ENCODE measurements at regions of chr15 and their contacts with region 1.

Region 1: DNA sequence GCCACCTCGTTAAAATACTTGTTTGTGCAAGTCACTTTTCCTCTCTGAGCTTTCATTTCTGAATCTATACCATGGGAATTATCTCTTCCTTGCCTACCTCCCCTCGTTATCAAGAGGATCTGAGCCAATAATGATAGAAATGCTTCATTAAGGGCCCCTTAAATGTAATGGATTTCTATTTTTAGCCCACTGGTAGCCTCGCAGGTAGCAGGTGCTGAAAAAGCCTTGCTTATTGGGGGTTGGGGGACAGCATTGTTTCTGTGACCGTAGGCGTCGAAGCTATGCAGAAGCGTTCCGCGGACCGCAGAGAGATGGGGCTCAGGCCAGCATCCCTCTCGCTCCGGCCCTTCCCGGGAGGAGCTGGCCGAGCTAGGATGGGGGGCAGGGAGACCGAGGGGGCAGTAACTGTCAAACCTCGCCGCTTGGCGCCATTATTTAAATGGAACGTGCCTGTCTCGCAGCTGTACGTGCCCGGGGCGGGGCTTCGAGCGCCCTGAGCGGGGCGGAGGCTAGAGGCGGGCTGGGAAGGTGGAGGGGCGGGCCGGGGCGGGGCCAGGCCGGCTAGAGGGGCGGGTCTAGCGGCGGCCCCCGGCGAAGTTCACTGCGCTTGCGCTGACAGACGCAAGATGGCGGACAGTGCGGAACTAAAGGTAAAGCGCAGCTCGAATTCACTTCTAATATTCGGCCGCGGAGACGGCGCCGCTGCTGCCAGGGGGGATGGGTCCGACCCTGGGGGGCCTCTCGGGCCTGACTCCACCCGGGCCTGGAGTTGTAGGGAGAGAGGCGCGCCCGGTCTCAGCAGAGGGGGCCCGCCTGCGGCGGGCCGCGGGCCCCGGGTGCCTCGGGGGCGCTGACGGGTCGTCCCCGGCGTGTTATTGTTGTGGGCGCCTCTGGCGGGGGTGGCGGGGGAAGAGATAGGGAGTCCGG is at the start of gene PIAS1:
- DNase-seq: peak; percentile 89
- ATAC-seq: peak; percentile 91
- H3K4me3 ChIP-seq: peak within 1 kb of the TSS; percentile 87 to 100 (median 94)
- H3K27ac ChIP-seq: peak within 1 kb of the TSS; percentile 94
- H3K4me1 ChIP-seq: peaks cover 51% of the 10 kb centered on the region
- H3K27me3 ChIP-seq: no peaks in the 10 kb centered on the region
- CTCF ChIP-seq: no peak
- EP300 ChIP-seq: peak in 1 of 2 experiments; percentile 46; a peak in 1 of 4 replicates
- POLR2A ChIP-seq: peak; percentile 80 to 85
- RAD21 ChIP-seq: no peak; the same call in 1 of the 2 replicates
- total RNA-seq, gene PIAS1: 20.7 and 23.2 TPM in 2 replicates

Region 2: GRCh38 chr15:67839929-67840748 is 213.8 kb before region 1 on chr15 and contains the start of gene RNU6-1:
- CTCF ChIA-PET with region 1: no interaction called
- POLR2A ChIA-PET with region 1: interaction called, 5 read pairs
- in situ Hi-C with region 1: no loop called
- intact Hi-C with region 1: loop called (anchors 5 kb)
- DNase-seq: peak; percentile 80
- ATAC-seq: peak; percentile 26
- H3K4me3 ChIP-seq: peak within 1 kb of the TSS; percentile 73 to 98 (median 93)
- H3K27ac ChIP-seq: peak within 1 kb of the TSS; percentile 86
- H3K4me1 ChIP-seq: peaks cover 81% of the 10 kb centered on the region
- H3K27me3 ChIP-seq: peaks cover 0 to 15% of the 10 kb centered on the region in 2 experiments; a peak in 4 of 5 replicates
- CTCF ChIP-seq: no peak
- EP300 ChIP-seq: no peak
- POLR2A ChIP-seq: peak; percentile 68 to 84
- RAD21 ChIP-seq: no peak
- total RNA-seq, gene RNU6-1: under 0.01 TPM in 1 of 2 replicates, not detected in the other

Region 3: GRCh38 chr15:67884514-67885487 is 169.2 kb before region 1 on chr15:
- CTCF ChIA-PET with region 1: no interaction called
- POLR2A ChIA-PET with region 1: no interaction called
- in situ Hi-C with region 1: no loop called
- intact Hi-C with region 1: loop called (anchors 2 kb)
- DNase-seq: peak; percentile 89
- ATAC-seq: peak; percentile 96
- H3K4me3 ChIP-seq: peak overlapping the region; percentile 43 to 60 (median 54); a peak in 5 of 6 replicates
- H3K27ac ChIP-seq: peak overlapping the region; percentile 81
- H3K4me1 ChIP-seq: peaks cover 60% of the 10 kb centered on the region
- H3K27me3 ChIP-seq: no peaks in the 10 kb centered on the region
- CTCF ChIP-seq: no peak
- EP300 ChIP-seq: peak; percentile 70 to 93; a peak in 3 of 4 replicates
- POLR2A ChIP-seq: peak; percentile 47 to 52; a peak in 3 of 4 replicates
- RAD21 ChIP-seq: no peak; the same call in 1 of the 2 replicates

Region 4: DNA sequence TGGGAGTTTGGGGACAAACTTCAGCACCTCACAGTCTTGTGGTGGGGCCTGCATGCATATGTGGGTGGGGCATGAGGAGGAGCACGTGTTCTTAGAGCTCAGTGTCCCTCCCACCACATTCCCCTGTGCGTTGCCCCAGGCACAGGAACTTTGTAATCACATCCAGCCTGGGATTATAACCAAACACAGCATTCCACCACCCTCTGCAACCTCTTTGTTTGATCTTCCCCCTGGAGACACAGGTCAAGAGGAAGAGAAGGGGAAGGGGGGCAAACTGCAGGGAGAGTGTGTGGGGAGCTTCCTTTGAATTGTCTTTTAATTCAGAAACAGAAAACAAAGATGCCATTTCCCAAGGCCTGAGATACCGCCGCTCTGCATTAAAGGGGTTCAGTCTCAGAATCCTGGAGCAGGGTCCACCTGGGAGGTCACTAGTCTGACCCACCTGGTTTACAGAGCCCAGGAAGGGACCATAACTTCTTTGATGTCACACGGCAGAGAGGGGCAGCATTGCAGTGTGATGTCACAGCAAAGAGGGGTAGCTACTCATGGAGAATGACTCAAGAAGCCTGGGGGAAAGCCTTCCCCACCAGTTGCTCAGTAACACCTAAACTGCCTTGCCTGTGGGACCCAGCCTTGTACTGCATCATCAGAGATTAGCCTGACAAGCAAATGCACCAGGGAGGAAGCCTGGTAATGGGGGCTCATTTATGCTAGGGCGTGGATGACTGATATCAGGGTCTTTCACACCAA is 107.8 kb before region 1 on chr15:
- CTCF ChIA-PET with region 1: no interaction called
- POLR2A ChIA-PET with region 1: interaction called, 23 read pairs
- in situ Hi-C with region 1: no loop called
- intact Hi-C with region 1: loop called (anchors 5 kb)
- DNase-seq: peak; percentile 98
- ATAC-seq: peak; percentile 96
- H3K4me3 ChIP-seq: peak overlapping the region; percentile 69 to 79 (median 79)
- H3K27ac ChIP-seq: peak overlapping the region; percentile 98
- H3K4me1 ChIP-seq: peaks cover 61% of the 10 kb centered on the region
- H3K27me3 ChIP-seq: no peaks in the 10 kb centered on the region; a peak in 1 of 5 replicates
- CTCF ChIP-seq: 0 out of 2 replicates have a peak, but pooled peaks have one; percentile 6
- EP300 ChIP-seq: peak; percentile 37 to 88; a peak in 3 of 4 replicates
- POLR2A ChIP-seq: peak; percentile 64 to 68
- RAD21 ChIP-seq: no peak

Region 5: DNA sequence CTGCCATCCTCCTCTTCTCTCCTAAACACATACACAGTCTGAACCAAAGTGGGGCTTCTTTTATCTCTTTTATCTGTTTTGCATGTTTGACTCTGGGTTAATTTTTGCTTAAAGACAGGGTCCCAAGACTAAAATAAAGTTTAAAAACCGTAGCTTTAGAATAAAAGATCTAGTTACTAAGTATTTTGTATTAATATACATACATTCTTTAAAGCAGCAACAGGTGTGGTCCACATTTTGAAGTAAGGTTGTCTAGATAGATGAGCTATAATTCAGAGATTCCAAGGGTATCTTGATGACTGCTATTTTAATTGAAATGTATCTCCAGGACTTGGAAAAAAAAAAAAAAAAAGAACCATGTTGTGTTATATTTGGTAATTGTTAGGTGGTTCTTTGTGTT is 89.8 kb after region 1 on chr15:
- CTCF ChIA-PET with region 1: no interaction called
- POLR2A ChIA-PET with region 1: no interaction called
- in situ Hi-C with region 1: no loop called
- intact Hi-C with region 1: no loop called
- DNase-seq: no peak
- ATAC-seq: no peak
- H3K4me3 ChIP-seq: no peak overlapping the region
- H3K27ac ChIP-seq: no peak overlapping the region
- H3K4me1 ChIP-seq: peaks cover 2% of the 10 kb centered on the region
- H3K27me3 ChIP-seq: no peaks in the 10 kb centered on the region
- CTCF ChIP-seq: no peak
- EP300 ChIP-seq: no peak
- POLR2A ChIP-seq: no peak
- RAD21 ChIP-seq: no peak

Region 6: DNA sequence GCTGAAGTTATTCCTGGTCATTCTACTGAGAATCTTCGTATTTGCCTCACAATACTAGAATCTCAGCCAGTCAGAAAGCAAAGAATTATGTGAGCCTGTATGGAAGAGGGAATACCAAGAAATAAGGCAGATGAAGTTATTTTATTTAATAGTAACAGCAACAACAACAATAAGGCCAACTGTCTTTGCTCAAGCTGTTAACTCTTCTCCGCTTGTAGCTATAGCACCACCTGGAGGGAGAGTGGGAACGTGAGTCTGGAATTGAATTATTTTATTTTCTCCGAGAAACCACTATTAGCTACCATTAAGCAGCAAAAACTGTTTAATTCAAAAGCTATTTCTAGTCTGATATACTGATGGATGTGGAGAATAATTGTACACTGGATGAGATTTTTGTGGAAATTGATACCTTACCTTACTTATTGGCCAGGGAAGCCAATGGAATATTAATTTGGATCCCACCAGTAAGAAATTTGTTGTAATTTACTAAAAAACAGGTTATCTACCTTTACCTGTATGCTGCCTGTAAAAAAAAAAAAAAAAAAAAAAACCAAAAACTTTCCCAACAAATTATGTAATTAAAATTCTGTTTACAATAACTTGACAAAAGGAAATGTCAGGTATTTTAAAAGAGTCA is 101.1 kb after region 1 on chr15:
- CTCF ChIA-PET with region 1: no interaction called
- POLR2A ChIA-PET with region 1: interaction called, 5 read pairs
- in situ Hi-C with region 1: no loop called
- intact Hi-C with region 1: loop called (anchors 10 kb)
- DNase-seq: peak; percentile 53
- ATAC-seq: no peak
- H3K4me3 ChIP-seq: no peak overlapping the region
- H3K27ac ChIP-seq: no peak overlapping the region
- H3K4me1 ChIP-seq: peaks cover 8% of the 10 kb centered on the region
- H3K27me3 ChIP-seq: no peaks in the 10 kb centered on the region
- CTCF ChIP-seq: peak; percentile 74
- EP300 ChIP-seq: no peak
- POLR2A ChIP-seq: no peak
- RAD21 ChIP-seq: peak; percentile 68; the same call in 1 of the 2 replicates